K562 (cell line): ENCODE measurements at regions of chr2 and their contacts with region 1.

Region 1: DNA sequence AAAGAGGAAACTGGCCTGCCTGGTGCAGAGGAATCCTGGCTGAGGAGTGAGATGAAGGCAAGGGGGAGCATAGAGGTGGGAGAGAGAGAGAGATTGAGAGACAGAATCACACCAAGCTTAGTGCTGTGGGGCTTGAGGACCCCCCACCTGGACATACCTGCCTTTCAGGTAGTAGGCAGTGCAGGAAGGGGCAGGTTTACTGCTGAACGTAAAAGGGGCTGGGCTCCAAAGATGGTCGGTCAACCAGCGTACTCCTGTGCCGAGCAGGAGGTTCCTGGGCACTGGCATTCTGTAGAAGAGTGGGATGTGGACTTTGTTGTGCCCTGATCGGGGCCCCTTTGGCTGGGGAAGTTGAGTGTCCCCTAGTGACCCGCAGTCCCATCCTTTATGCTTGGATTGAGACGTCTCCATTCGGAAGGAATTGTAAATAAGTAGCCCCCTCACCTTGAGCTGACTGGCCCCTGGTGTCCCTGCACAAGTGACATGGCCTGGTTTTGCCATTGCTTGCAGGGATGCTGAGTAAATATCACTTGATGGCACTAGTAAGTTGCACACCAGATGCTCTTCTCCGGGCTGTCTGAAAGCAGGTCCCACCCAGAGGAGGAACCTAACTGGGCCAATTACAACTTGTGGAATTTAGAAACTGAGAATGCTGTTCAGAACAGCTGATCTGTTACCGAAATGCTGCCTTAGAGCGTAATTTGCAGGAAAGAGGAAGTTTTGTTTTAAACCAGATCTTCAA is 1.5 kb downstream of the UBE2F start:
- DNase-seq: peak in 2 of 4 experiments; percentile 47 to 52
- ATAC-seq: peak; percentile 8; the same call in 2 of the 3 replicates
- H3K4me3 ChIP-seq: peak overlapping the region; percentile 79
- H3K27ac ChIP-seq: no peak overlapping the region; the same call in 2 of the 3 replicates
- H3K4me1 ChIP-seq: peaks cover 37 to 41% of the 10 kb centered on the region in 2 experiments
- H3K27me3 ChIP-seq: no peaks in the 10 kb centered on the region
- CTCF ChIP-seq: peak in 2 of 3 experiments; percentile 3 to 41; a peak in 2 of 6 replicates
- EP300 ChIP-seq: no peak
- POLR2A ChIP-seq: no peak
- RAD21 ChIP-seq: peak in 1 of 2 experiments; percentile 30; a peak in 2 of 4 replicates

Region 2: DNA sequence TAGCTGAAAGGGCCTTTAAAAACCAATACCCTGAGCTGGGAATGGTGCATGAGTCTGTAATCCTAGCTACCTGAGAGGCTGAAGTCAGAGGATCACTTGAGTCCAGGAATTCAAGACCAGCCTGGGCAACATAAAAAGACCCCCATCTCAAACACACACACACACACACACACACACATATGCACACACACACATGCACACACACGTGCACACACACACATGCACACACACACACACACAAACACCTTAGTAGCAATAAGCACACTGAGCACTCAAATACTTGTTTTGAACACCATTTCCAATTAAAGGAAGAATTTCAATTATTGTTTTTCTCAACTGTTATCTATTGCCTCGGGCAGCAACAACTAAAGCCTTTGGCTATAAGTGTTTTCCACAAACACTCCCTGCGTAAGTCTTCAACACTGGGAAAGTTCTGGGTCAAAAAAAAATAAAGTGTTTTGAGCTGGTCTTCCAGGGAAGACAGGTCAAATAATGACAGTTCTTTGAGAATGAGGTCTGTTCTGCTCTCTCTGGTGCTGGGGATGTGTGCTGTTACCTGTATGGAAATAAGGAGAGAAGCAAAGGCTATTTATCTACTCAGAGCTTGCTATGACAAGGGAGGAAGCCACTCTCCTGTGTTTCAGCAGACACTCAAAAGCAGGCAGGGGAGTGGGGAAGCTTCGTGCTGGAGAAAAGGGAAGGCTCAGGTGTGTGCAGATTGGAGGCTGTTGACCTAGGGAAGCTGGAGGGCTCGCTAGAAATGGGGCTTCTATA is 26.9 kb before region 1 on chr2:
- CTCF ChIA-PET with region 1: no interaction called
- POLR2A ChIA-PET with region 1: interaction called, 6 read pairs
- in situ Hi-C with region 1: no loop called
- intact Hi-C with region 1: loop called (anchors 1 kb)
- DNase-seq: peak in 1 of 4 experiments; percentile 23
- ATAC-seq: peak; percentile 58
- H3K4me3 ChIP-seq: no peak overlapping the region
- H3K27ac ChIP-seq: peak overlapping the region; percentile 70
- H3K4me1 ChIP-seq: peaks cover 31 to 38% of the 10 kb centered on the region in 2 experiments; a peak in 4 of 5 replicates
- H3K27me3 ChIP-seq: no peaks in the 10 kb centered on the region
- CTCF ChIP-seq: no peak
- EP300 ChIP-seq: no peak
- POLR2A ChIP-seq: no peak
- RAD21 ChIP-seq: no peak